Gastrocnemius medialis (tissue), 4 donors: ENCODE measurements at regions of chr3 and their contacts with region 1.

Region 1: GRCh38 chr3:9088441-9089353 is 125.4 kb upstream of the RAD18 start:
- DNase-seq: no peak
- ATAC-seq: peak in 1 of 2 donors; percentile 61
- H3K4me3 ChIP-seq: no peak overlapping the region
- H3K27ac ChIP-seq: no peak overlapping the region
- H3K4me1 ChIP-seq: peaks cover 0 to 13% of the 10 kb centered on the region in 2 donors
- H3K27me3 ChIP-seq: no peaks in the 10 kb centered on the region
- CTCF ChIP-seq: no peak
- POLR2A ChIP-seq: no peak

Region 2: DNA sequence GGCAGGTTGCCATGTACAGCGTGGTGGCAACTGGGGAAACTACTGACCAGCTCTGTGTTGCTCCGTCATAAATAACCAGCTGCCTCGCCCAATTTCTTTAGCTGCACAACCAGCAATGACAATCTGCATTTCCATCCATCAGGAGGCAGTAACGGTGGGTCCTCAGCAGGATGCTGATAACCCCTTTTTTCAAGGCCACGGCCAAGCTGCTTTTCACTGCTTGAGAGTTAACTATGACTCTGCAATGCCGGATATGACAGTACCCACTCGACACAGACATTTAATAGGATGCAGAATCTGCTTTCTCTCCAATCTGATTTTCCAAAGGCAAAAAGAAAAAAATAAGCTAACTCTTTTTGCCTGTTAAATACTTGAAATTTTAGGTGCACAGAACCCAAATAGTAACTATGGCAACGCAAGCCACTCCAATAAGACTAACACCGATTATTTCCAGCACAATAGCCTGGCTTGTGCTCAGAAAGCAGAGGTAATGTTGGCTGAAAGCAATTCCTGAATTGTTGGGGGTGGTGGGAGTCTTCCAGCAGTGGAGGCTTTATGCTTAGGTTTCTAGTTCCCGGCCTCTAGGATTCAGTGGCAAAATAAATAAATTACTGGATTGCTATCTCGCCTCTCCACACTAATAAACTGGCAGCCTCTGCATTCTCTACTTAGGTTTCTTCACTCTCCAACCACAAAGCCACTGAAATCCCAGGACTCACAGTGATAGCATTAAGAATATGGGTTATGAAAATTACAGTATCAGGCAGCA is 191.9 kb after region 1 on chr3:
- in situ Hi-C with region 1: loop called in 1 of 4 experiments (anchors 25 kb)
- intact Hi-C with region 1: no loop called
- DNase-seq: no peak
- ATAC-seq: no peak
- H3K4me3 ChIP-seq: no peak overlapping the region
- H3K27ac ChIP-seq: no peak overlapping the region
- H3K4me1 ChIP-seq: no peaks in the 10 kb centered on the region
- H3K27me3 ChIP-seq: no peaks in the 10 kb centered on the region
- CTCF ChIP-seq: no peak
- POLR2A ChIP-seq: no peak